CD14-positive monocyte (primary cell): ENCODE measurements at regions of chr3 and their contacts with region 1.

Region 1: GRCh38 chr3:123152687-123153086 is 49.1 kb upstream of the SEC22A start:
- DNase-seq: peak; percentile 47 to 65 (median 61)
- H3K4me3 ChIP-seq: peak overlapping the region in 1 of 3 experiments; percentile 59
- H3K4me3 Mint-ChIP-seq: peak overlapping the region in 1 of 2 donors; percentile 59
- H3K27ac ChIP-seq: peak overlapping the region; percentile 67 to 90
- H3K27ac Mint-ChIP-seq: peak overlapping the region; percentile 79 to 95 (median 87)
- H3K4me1 ChIP-seq: peaks cover 43 to 47% of the 10 kb centered on the region in 2 donors
- H3K4me1 Mint-ChIP-seq: peaks cover 38% of the 10 kb centered on the region
- H3K27me3 ChIP-seq: no peaks in the 10 kb centered on the region
- H3K27me3 Mint-ChIP-seq: peaks cover 0 to 2% (median 0%) of the 10 kb centered on the region in 3 donors
- CTCF ChIP-seq: no peak

Region 2: GRCh38 chr3:123015557-123015956 is 137.1 kb before region 1 on chr3:
- intact Hi-C with region 1: no loop called
- DNase-seq: no peak
- H3K4me3 ChIP-seq: no peak overlapping the region
- H3K4me3 Mint-ChIP-seq: no peak overlapping the region
- H3K27ac ChIP-seq: no peak overlapping the region
- H3K27ac Mint-ChIP-seq: no peak overlapping the region
- H3K4me1 ChIP-seq: no peaks in the 10 kb centered on the region
- H3K4me1 Mint-ChIP-seq: peaks cover 5% of the 10 kb centered on the region
- H3K27me3 ChIP-seq: peaks cover 0 to 4% of the 10 kb centered on the region in 2 donors
- H3K27me3 Mint-ChIP-seq: peaks cover 4 to 8% (median 7%) of the 10 kb centered on the region in 3 donors
- CTCF ChIP-seq: no peak

Region 3: GRCh38 chr3:123198372-123198771 is 45.7 kb after region 1 on chr3:
- intact Hi-C with region 1: loop called in 1 of 2 experiments (anchors 5 kb)
- DNase-seq: no peak
- H3K4me3 ChIP-seq: no peak overlapping the region
- H3K4me3 Mint-ChIP-seq: no peak overlapping the region
- H3K27ac ChIP-seq: no peak overlapping the region
- H3K27ac Mint-ChIP-seq: no peak overlapping the region
- H3K4me1 ChIP-seq: peaks cover 17 to 19% of the 10 kb centered on the region in 2 donors
- H3K4me1 Mint-ChIP-seq: peaks cover 18% of the 10 kb centered on the region
- H3K27me3 ChIP-seq: no peaks in the 10 kb centered on the region
- H3K27me3 Mint-ChIP-seq: peaks cover 0 to 5% (median 1%) of the 10 kb centered on the region in 3 donors
- CTCF ChIP-seq: no peak